WTC11 (cell line): ENCODE measurements at regions of chr5 and their contacts with region 1.

Region 1: GRCh38 chr5:154697371-154697770 is 57.8 kb upstream of the LARP1 start:
- DNase-seq: no peak
- ATAC-seq: no peak
- H3K4me3 Mint-ChIP-seq: peak overlapping the region; percentile 15
- H3K27ac Mint-ChIP-seq: peak overlapping the region; percentile 90
- H3K4me1 Mint-ChIP-seq: peaks cover 70% of the 10 kb centered on the region
- H3K27me3 Mint-ChIP-seq: no peaks in the 10 kb centered on the region
- CTCF ChIP-seq: no peak

Region 2: GRCh38 chr5:154575546-154576428 is 121.6 kb before region 1 on chr5:
- CTCF ChIA-PET with region 1: no interaction called
- POLR2A ChIA-PET with region 1: no interaction called
- DNase-seq: no peak
- ATAC-seq: peak; percentile 23; the same call in 1 of the 2 replicates
- H3K4me3 Mint-ChIP-seq: no peak overlapping the region
- H3K27ac Mint-ChIP-seq: no peak overlapping the region
- H3K4me1 Mint-ChIP-seq: peaks cover 14% of the 10 kb centered on the region
- H3K27me3 Mint-ChIP-seq: peaks cover 4% of the 10 kb centered on the region
- CTCF ChIP-seq: no peak

Region 3: DNA sequence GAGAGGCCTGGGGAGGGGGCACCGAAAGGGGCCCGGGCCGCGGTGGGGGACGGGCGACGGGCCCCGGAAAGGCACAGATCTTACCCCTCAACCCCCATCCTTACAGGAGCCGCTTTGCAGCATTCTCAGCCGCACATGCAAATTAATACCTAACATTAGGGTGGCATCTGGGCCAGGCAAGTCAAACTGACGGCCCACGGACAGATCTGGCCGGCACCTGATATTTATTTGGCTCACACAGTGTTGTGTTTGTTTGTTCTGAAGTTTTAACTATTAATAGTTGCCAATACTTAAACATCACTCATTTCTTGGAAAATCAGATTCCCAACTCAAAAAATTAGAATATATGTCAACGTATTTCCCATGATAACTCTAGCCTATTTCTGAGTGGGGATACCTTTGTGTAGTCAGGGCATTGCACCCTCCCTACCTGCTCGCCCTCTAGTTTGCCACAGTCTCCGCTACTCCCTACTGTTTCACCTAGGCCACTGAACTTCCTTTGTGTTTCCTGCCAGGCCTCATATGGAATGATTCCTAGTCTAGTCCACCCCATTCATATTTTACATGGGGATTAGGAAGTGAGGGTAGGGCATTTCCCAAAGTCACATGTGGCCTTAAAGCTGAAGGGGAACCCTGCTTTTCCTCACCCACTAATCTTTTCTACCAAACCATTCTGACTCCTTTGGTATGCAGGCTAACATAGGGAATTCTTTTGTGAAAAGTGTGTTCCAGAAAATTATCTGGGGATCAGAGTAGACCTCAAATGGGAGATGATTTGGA is 14.1 kb before region 1 on chr5:
- CTCF ChIA-PET with region 1: interaction called, 9 read pairs
- POLR2A ChIA-PET with region 1: interaction called, 10 read pairs
- DNase-seq: no peak
- ATAC-seq: peak; percentile 5
- H3K4me3 Mint-ChIP-seq: peak overlapping the region; percentile 70
- H3K27ac Mint-ChIP-seq: peak overlapping the region; percentile 84
- H3K4me1 Mint-ChIP-seq: peaks cover 23% of the 10 kb centered on the region
- H3K27me3 Mint-ChIP-seq: no peaks in the 10 kb centered on the region
- CTCF ChIP-seq: no peak

Region 4: DNA sequence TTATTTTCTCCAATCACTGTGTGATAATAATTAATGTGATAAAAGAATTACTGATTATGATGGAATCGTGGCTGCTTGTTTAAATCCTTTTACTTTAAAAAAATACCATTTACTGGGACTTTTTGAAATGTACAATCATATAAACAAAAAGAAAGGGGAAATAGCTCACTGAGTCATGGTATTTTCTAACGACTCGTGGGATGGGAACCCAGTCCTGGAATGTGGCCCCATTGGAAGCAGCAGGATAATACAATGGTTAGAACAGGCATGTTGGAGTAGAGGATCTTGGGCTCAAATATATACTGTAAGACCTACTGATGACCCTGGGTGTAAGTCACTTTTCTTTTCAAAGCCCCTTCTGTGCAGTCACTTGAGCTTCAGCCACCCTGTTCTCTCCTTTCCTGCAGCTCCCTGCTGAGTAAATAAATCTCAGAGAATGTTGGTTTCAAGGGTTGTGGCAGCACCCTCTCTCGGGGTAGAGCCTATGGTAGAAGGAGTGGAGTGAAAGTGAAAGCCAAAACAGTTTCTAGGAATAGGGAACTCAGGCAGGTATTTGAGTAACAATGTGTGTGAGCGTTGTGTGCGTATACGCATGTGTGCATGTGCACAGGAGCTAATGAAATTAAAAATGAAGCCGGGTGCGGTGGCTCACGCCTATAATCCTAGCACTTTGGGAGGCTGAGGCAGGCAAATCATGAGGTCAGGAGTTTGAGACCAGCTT is 17.1 kb after region 1 on chr5:
- CTCF ChIA-PET with region 1: interaction called, 4 read pairs
- POLR2A ChIA-PET with region 1: interaction called, 28 read pairs
- DNase-seq: no peak
- ATAC-seq: no peak
- H3K4me3 Mint-ChIP-seq: peak overlapping the region; percentile 65
- H3K27ac Mint-ChIP-seq: peak overlapping the region; percentile 77
- H3K4me1 Mint-ChIP-seq: peaks cover 60% of the 10 kb centered on the region
- H3K27me3 Mint-ChIP-seq: no peaks in the 10 kb centered on the region
- CTCF ChIP-seq: no peak